Vagina (tissue), 2 donors: ENCODE measurements at regions of chr6 and their contacts with region 1.

Region 1: GRCh38 chr6:91464201-91464600 is 877.3 kb upstream of the MAP3K7 start:
- DNase-seq: no peak
- H3K4me3 ChIP-seq: no peak overlapping the region
- H3K27ac ChIP-seq: no peak overlapping the region
- H3K4me1 ChIP-seq: no peaks in the 10 kb centered on the region
- H3K27me3 ChIP-seq: no peaks in the 10 kb centered on the region
- CTCF ChIP-seq: no peak
- POLR2A ChIP-seq: no peak

Region 2: DNA sequence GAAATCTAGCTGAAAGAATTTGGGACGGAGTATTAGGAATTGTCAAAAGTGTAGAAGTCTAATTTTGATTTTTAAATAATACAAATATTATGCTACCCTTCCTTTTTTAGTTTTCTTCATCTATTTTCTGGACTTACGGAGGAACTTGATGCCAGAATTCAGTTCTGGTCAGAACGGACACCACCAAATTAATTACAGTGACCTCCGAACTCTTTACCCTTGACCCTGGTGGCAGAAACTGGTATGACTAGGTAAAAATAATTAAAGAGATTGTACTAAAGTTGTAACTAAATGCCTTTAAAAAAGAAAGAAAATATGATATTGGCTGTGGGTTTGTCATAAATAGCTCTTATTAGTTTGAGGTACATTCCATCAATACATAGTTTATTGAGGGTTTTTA is 126.2 kb before region 1 on chr6:
- intact Hi-C with region 1: loop called (anchors 10 kb)
- DNase-seq: no peak
- H3K4me3 ChIP-seq: no peak overlapping the region
- H3K27ac ChIP-seq: no peak overlapping the region
- H3K4me1 ChIP-seq: no peaks in the 10 kb centered on the region
- H3K27me3 ChIP-seq: no peaks in the 10 kb centered on the region
- CTCF ChIP-seq: no peak
- POLR2A ChIP-seq: no peak